IMR-90 (cell line): ENCODE measurements at regions of chr7 and their contacts with region 1.

Region 1: GRCh38 chr7:74633451-74633921 is 24.0 kb upstream of the GTF2I start:
- DNase-seq: no peak
- ATAC-seq: no peak
- H3K4me3 ChIP-seq: no peak overlapping the region
- H3K27ac ChIP-seq: no peak overlapping the region
- H3K4me1 ChIP-seq: peaks cover 4% of the 10 kb centered on the region
- H3K27me3 ChIP-seq: no peaks in the 10 kb centered on the region
- CTCF ChIP-seq: no peak
- POLR2A ChIP-seq: no peak
- RAD21 ChIP-seq: no peak

Region 2: DNA sequence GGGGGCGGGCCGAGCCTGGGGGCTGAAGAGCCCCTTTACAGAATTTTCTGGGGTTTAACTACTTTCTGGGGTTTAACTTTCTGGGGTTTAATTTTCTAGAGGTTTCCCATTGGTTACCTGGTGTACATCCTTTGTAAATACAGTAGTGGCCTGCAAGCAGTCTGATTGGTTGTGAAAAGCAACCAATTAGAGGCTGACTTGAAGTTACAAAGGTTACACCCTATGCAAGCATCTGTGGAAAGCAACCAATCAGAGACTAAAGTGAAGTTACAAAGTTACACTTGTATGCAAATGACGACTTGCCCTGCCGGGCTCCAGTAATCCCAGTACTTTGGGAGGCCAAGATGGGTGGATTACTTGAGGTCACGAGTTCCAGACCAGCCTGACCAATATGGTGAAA is 51.4 kb after region 1 on chr7:
- CTCF ChIA-PET with region 1: no interaction called
- POLR2A ChIA-PET with region 1: no interaction called
- dilution Hi-C with region 1: no loop called
- in situ Hi-C with region 1: no loop called
- intact Hi-C with region 1: loop called (anchors 2 kb)
- DNase-seq: no peak
- ATAC-seq: no peak
- H3K4me3 ChIP-seq: no peak overlapping the region
- H3K27ac ChIP-seq: no peak overlapping the region
- H3K4me1 ChIP-seq: no peaks in the 10 kb centered on the region
- H3K27me3 ChIP-seq: no peaks in the 10 kb centered on the region
- CTCF ChIP-seq: no peak
- POLR2A ChIP-seq: no peak
- RAD21 ChIP-seq: no peak

Region 3: GRCh38 chr7:74985531-74985930 is 352.0 kb after region 1 on chr7:
- CTCF ChIA-PET with region 1: no interaction called
- POLR2A ChIA-PET with region 1: no interaction called
- dilution Hi-C with region 1: no loop called
- in situ Hi-C with region 1: no loop called
- intact Hi-C with region 1: no loop called
- DNase-seq: no peak
- ATAC-seq: no peak
- H3K4me3 ChIP-seq: no peak overlapping the region
- H3K27ac ChIP-seq: no peak overlapping the region
- H3K4me1 ChIP-seq: no peaks in the 10 kb centered on the region
- H3K27me3 ChIP-seq: no peaks in the 10 kb centered on the region
- CTCF ChIP-seq: no peak
- POLR2A ChIP-seq: no peak
- RAD21 ChIP-seq: no peak